Esophagus muscularis mucosa (tissue), 4 donors: ENCODE measurements at regions of chr10 and their contacts with region 1.

Region 1: GRCh38 chr10:102917962-102918816 is at the start of gene CNNM2:
- DNase-seq: peak; percentile 100
- H3K4me3 ChIP-seq: peak within 1 kb of the TSS; percentile 89 to 99 (median 95)
- H3K27ac ChIP-seq: peak within 1 kb of the TSS; percentile 87 to 96 (median 91)
- H3K4me1 ChIP-seq: peaks cover 14 to 52% (median 51%) of the 10 kb centered on the region in 4 donors
- H3K27me3 ChIP-seq: no peaks in the 10 kb centered on the region
- CTCF ChIP-seq: no peak
- EP300 ChIP-seq: no peak
- POLR2A ChIP-seq: no peak
- total RNA-seq, gene CNNM2: 4.0 to 9.3 (median 5.4) TPM

Region 2: DNA sequence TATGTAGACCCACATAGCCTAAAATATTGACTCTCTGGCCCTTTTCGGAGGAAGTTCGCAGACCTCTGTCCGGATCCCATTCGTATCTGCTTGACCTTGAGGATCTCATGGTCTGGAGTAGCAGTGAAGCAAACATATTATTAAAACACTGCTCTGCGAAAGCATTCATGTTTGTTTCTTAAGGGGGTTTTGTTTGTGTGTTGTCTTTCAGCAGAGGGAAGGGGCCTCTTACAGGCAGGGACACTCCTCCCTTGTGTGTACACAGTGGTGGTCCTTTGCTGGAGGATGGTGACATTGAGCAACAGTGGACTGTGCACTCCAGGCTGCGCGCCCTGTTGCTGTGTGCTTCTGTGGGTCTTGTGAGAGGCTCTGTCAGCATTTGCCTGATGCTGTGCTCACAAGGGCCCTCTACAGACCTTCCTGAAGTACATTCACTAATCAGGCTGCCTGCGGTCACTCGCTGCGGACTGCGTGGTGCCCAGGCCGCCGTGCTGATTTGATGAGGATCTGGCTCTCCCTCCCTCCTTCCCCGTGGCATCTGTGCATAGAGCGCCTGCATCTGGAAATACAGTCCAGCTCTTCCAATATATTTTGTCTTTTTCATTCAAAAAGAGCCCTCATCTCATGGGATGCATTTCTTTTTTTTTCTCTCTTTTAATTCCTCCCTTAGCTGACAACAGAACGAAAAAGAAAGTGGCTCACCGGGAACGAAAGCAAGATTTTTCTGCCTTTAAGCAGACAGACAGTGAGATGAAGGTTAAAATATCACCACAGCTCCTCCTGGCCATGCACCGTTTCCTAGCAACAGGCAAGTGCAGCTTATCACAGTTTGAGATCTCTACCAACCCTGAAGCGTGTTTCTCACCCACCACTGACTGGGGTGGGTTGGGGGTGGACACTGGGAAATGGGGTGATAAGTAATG is 135.7 kb after region 1 on chr10:
- intact Hi-C with region 1: loop called (anchors 5 kb)
- DNase-seq: no peak
- H3K4me3 ChIP-seq: peak overlapping the region; percentile 40 to 50 (median 44)
- H3K27ac ChIP-seq: peak overlapping the region; percentile 46 to 66 (median 54)
- H3K4me1 ChIP-seq: peaks cover 5 to 16% (median 15%) of the 10 kb centered on the region in 4 donors
- H3K27me3 ChIP-seq: no peaks in the 10 kb centered on the region
- CTCF ChIP-seq: peak; percentile 10 to 48 (median 34)
- EP300 ChIP-seq: no peak
- POLR2A ChIP-seq: no peak

Region 3: DNA sequence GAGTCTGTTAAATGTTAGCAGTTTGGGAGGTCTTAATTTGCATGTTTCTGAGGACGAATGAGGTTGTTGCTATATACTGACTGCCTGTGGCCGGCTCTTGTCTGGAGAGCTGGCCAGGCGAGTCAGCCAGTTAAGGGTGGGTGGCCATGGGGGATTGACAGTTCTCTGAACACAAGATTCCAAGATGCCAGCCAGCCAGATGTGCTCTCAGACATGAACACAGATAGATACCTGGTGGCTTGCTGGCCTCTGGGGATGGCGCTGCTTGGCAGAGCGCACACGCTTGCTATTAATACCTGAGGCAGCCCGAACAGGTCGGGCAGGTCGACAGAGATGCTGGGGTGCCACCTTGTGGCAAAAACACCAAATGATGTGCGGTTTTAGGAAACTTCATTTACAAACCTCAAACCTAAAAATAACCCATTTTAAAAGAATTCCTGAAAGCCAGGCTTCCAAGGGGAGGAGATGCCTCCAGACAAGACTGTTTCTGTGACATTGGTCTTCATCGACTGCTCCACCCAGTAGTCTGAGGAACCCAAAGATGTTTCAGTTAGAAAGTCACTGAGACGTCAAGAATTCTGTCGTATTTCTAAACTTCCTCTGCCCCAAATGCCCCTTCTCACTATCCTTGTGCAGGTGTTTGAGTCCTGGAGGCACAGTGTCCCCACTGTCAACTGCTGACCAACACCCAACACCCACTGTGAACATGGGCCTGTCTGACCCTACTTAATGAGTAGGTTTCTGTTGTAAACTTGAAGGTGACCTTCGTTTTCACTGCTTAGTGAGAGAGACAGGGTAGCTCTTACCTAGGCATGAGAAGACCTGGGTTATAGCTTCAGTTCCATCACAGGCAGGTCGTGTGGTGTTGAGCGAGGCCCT is 151.5 kb after region 1 on chr10:
- intact Hi-C with region 1: loop called (anchors 1 kb)
- DNase-seq: no peak
- H3K4me3 ChIP-seq: no peak overlapping the region
- H3K27ac ChIP-seq: no peak overlapping the region
- H3K4me1 ChIP-seq: peaks cover 0 to 6% (median 0%) of the 10 kb centered on the region in 4 donors
- H3K27me3 ChIP-seq: no peaks in the 10 kb centered on the region
- CTCF ChIP-seq: peak; percentile 65 to 70 (median 68)
- EP300 ChIP-seq: no peak
- POLR2A ChIP-seq: no peak

Region 4: GRCh38 chr10:103192451-103193106 is 274.4 kb after region 1 on chr10:
- intact Hi-C with region 1: loop called (anchors 5 kb)
- DNase-seq: peak; percentile 94
- H3K4me3 ChIP-seq: peak overlapping the region; percentile 98 to 100 (median 99)
- H3K27ac ChIP-seq: peak overlapping the region; percentile 98 to 100 (median 98)
- H3K4me1 ChIP-seq: peaks cover 52 to 63% (median 58%) of the 10 kb centered on the region in 4 donors
- H3K27me3 ChIP-seq: no peaks in the 10 kb centered on the region
- CTCF ChIP-seq: no peak
- EP300 ChIP-seq: no peak
- POLR2A ChIP-seq: no peak